ENCODE measurements at regions of chr6 and their contacts with region 1.

Region 1: DNA sequence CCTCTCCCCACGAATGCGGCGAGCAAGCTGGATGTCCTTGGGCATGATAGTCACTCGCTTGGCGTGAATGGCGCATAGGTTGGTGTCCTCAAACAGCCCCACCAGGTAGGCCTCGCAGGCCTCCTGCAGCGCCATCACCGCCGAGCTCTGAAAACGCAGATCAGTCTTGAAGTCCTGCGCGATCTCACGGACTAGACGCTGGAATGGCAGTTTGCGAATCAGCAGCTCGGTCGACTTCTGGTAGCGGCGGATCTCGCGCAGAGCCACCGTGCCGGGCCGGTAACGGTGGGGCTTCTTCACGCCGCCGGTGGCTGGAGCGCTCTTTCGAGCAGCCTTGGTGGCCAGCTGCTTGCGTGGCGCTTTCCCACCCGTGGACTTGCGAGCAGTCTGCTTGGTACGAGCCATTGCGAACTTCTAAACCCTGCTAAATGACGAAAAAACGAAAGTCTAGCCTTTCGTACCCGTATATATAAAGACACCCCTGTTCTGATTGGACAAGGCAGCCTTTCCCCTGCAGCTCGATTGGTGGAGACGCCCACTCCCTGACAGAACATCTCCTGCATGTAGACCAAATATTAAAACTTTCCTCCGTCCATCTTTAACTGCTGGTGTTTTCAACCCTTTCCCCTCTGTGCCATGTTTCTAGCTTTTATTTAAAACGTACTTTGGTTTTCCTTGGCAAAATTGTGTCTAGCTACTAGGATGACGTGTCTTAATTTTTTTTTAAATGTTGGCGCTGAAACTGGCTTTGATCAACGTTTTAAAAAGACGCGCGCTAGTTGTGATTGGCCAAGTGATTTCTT is 109.8 kb downstream of the HFE start:
- DNase-seq: peak; percentile 55 to 95 (median 93)
- ATAC-seq: peak; percentile 73
- H3K4me3 ChIP-seq: peak overlapping the region; percentile 92
- H3K4me3 Mint-ChIP-seq: peak overlapping the region; percentile 85 to 99 (median 96)
- H3K27ac ChIP-seq: peak overlapping the region; percentile 91
- H3K27ac Mint-ChIP-seq: peak overlapping the region; percentile 96 to 100 (median 98)
- H3K4me1 ChIP-seq: peaks cover 10 to 12% of the 10 kb centered on the region in 2 donors
- H3K4me1 Mint-ChIP-seq: peaks cover 23 to 65% (median 42%) of the 10 kb centered on the region in 7 donors
- H3K27me3 ChIP-seq: no peaks in the 10 kb centered on the region
- H3K27me3 Mint-ChIP-seq: peaks cover 0 to 12% (median 0%) of the 10 kb centered on the region in 5 donors

Region 2: GRCh38 chr6:25534942-25535631 is 662.0 kb before region 1 on chr6:
- CTCF ChIA-PET with region 1: no interaction called
- POLR2A ChIA-PET with region 1: no interaction called
- intact Hi-C with region 1: no loop called
- DNase-seq: no peak
- ATAC-seq: no peak
- H3K4me3 ChIP-seq: no peak overlapping the region
- H3K4me3 Mint-ChIP-seq: no peak overlapping the region
- H3K27ac ChIP-seq: no peak overlapping the region
- H3K27ac Mint-ChIP-seq: no peak overlapping the region
- H3K4me1 ChIP-seq: no peaks in the 10 kb centered on the region
- H3K4me1 Mint-ChIP-seq: no peaks in the 10 kb centered on the region
- H3K27me3 ChIP-seq: peaks cover 0 to 3% of the 10 kb centered on the region in 2 donors
- H3K27me3 Mint-ChIP-seq: peaks cover 0 to 2% (median 0%) of the 10 kb centered on the region in 5 donors

Region 3: DNA sequence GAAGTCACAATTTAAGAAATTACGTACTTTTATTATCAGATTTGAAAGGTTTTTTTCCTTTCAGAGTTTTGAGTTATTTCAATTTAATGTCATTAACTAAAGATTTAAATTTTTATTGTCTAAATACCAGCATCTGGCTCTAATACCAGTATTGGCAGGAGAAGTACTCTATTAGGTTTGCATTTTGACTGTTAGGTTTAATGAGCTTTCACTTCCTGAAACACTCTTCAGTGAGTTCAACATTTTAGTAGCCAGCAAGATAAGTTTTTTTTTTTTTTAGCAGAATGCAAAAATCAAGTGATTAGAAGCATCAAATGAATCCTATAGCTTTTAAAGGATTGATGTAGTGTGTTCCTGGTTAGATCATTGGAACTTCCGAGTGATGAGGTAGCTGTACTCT is 579.0 kb before region 1 on chr6:
- CTCF ChIA-PET with region 1: no interaction called
- POLR2A ChIA-PET with region 1: no interaction called
- intact Hi-C with region 1: no loop called
- DNase-seq: no peak
- ATAC-seq: no peak
- H3K4me3 ChIP-seq: no peak overlapping the region
- H3K4me3 Mint-ChIP-seq: no peak overlapping the region
- H3K27ac ChIP-seq: no peak overlapping the region
- H3K27ac Mint-ChIP-seq: no peak overlapping the region
- H3K4me1 ChIP-seq: no peaks in the 10 kb centered on the region
- H3K4me1 Mint-ChIP-seq: no peaks in the 10 kb centered on the region
- H3K27me3 ChIP-seq: no peaks in the 10 kb centered on the region
- H3K27me3 Mint-ChIP-seq: peaks cover 0 to 2% (median 0%) of the 10 kb centered on the region in 5 donors

Region 4: GRCh38 chr6:26087284-26088115 is 109.5 kb before region 1 on chr6 and contains the start of gene HFE:
- CTCF ChIA-PET with region 1: no interaction called
- POLR2A ChIA-PET with region 1: interaction called, 10 read pairs
- intact Hi-C with region 1: no loop called
- DNase-seq: peak in 8 of 9 donors; percentile 32 to 46 (median 38)
- ATAC-seq: peak; percentile 41
- H3K4me3 ChIP-seq: peak within 1 kb of the TSS; percentile 88
- H3K4me3 Mint-ChIP-seq: peak within 1 kb of the TSS; percentile 84 to 91 (median 88)
- H3K27ac ChIP-seq: peak within 1 kb of the TSS; percentile 72
- H3K27ac Mint-ChIP-seq: peak within 1 kb of the TSS; percentile 73 to 91 (median 84)
- H3K4me1 ChIP-seq: peaks cover 18 to 23% of the 10 kb centered on the region in 2 donors
- H3K4me1 Mint-ChIP-seq: peaks cover 31 to 51% (median 39%) of the 10 kb centered on the region in 7 donors
- H3K27me3 ChIP-seq: no peaks in the 10 kb centered on the region
- H3K27me3 Mint-ChIP-seq: peaks cover 0 to 5% (median 5%) of the 10 kb centered on the region in 5 donors
- total RNA-seq, gene HFE: 1.5 to 4.6 (median 2.5) TPM

Region 5: GRCh38 chr6:26234421-26235296 is 37.6 kb after region 1 on chr6:
- CTCF ChIA-PET with region 1: interaction called, 12 read pairs
- POLR2A ChIA-PET with region 1: interaction called, 2,165 read pairs
- intact Hi-C with region 1: loop called in 1 of 2 experiments (anchors 1 kb)
- DNase-seq: peak; percentile 48 to 94 (median 85)
- ATAC-seq: peak; percentile 80
- H3K4me3 ChIP-seq: peak overlapping the region; percentile 93
- H3K4me3 Mint-ChIP-seq: peak overlapping the region; percentile 87 to 99 (median 94)
- H3K27ac ChIP-seq: peak overlapping the region; percentile 87
- H3K27ac Mint-ChIP-seq: peak overlapping the region; percentile 93 to 100 (median 98)
- H3K4me1 ChIP-seq: peaks cover under 1 to 18% of the 10 kb centered on the region in 2 donors
- H3K4me1 Mint-ChIP-seq: peaks cover 18 to 52% (median 38%) of the 10 kb centered on the region in 7 donors
- H3K27me3 ChIP-seq: no peaks in the 10 kb centered on the region
- H3K27me3 Mint-ChIP-seq: peaks cover 0 to 15% (median 0%) of the 10 kb centered on the region in 5 donors

Region 6: DNA sequence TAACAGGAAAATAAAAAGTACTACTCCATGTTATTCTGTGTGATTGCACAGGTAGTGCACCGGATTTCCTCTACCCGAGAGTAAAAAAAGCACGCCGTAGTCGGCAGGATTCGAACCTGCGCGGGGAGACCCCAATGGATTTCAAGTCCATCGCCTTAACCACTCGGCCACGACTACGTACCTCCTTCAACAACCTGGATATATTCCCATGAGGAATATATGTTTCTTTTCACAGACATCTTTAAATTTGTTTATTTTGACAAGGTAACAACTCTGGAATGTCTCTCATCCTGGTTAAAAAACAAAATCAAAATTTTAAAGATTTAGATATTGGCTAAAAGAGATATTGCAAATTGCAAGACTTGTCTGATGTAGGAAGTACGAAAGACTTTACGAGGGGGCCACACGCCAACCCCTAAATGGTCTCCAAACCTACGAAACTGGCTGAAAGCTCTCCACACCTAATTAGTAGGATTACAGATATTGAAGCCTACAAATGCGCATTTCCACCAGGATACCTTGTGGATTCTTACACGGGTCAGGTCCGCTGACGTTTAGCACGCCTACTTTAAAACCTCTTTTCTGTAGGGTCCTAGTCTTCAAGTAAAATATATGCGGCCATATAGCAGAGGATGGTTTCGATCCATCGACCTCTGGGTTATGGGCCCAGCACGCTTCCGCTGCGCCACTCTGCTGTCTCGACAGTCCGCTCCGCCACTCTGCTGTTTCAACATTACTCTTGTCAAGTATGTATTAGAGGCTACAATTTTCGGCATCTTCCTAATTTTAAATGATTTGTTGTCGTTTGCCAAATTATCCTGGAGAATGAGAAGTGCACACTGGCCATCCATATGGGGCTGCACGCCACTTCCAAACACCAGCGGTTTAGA is 115.7 kb after region 1 on chr6:
- CTCF ChIA-PET with region 1: no interaction called
- POLR2A ChIA-PET with region 1: interaction called, 11 read pairs
- intact Hi-C with region 1: no loop called
- DNase-seq: peak; percentile 64 to 91 (median 86)
- ATAC-seq: peak; percentile 75
- H3K4me3 ChIP-seq: peak overlapping the region; percentile 81
- H3K4me3 Mint-ChIP-seq: peak overlapping the region; percentile 83 to 100 (median 96)
- H3K27ac ChIP-seq: peak overlapping the region; percentile 55
- H3K27ac Mint-ChIP-seq: peak overlapping the region; percentile 82 to 100 (median 96)
- H3K4me1 ChIP-seq: peaks cover 4 to 19% of the 10 kb centered on the region in 2 donors
- H3K4me1 Mint-ChIP-seq: peaks cover 5 to 51% (median 37%) of the 10 kb centered on the region in 7 donors
- H3K27me3 ChIP-seq: no peaks in the 10 kb centered on the region
- H3K27me3 Mint-ChIP-seq: peaks cover 0 to 8% (median 0%) of the 10 kb centered on the region in 5 donors

Region 7: GRCh38 chr6:27126815-27127537 is 929.9 kb after region 1 on chr6:
- CTCF ChIA-PET with region 1: interaction called, 4 read pairs
- POLR2A ChIA-PET with region 1: interaction called, 61 read pairs
- intact Hi-C with region 1: loop called in 1 of 2 experiments (anchors 1 kb)
- DNase-seq: peak; percentile 46 to 82 (median 77)
- ATAC-seq: peak; percentile 89
- H3K4me3 ChIP-seq: peak overlapping the region; percentile 33
- H3K4me3 Mint-ChIP-seq: peak overlapping the region; percentile 35 to 90 (median 77)
- H3K27ac ChIP-seq: no peak overlapping the region
- H3K27ac Mint-ChIP-seq: peak overlapping the region; percentile 41 to 93 (median 82)
- H3K4me1 ChIP-seq: peaks cover 4 to 6% of the 10 kb centered on the region in 2 donors
- H3K4me1 Mint-ChIP-seq: peaks cover 6 to 51% (median 15%) of the 10 kb centered on the region in 7 donors
- H3K27me3 ChIP-seq: no peaks in the 10 kb centered on the region
- H3K27me3 Mint-ChIP-seq: no peaks in the 10 kb centered on the region

Region 8: GRCh38 chr6:27864906-27865849 is 1668.1 kb after region 1 on chr6:
- CTCF ChIA-PET with region 1: no interaction called
- POLR2A ChIA-PET with region 1: interaction called, 144 read pairs
- intact Hi-C with region 1: no loop called
- DNase-seq: peak; percentile 56 to 93 (median 89)
- ATAC-seq: peak; percentile 85
- H3K4me3 ChIP-seq: peak overlapping the region; percentile 74
- H3K4me3 Mint-ChIP-seq: peak overlapping the region; percentile 85 to 99 (median 97)
- H3K27ac ChIP-seq: peak overlapping the region; percentile 71
- H3K27ac Mint-ChIP-seq: peak overlapping the region; percentile 88 to 98 (median 95)
- H3K4me1 ChIP-seq: peaks cover 8 to 25% of the 10 kb centered on the region in 2 donors
- H3K4me1 Mint-ChIP-seq: peaks cover 22 to 64% (median 46%) of the 10 kb centered on the region in 7 donors
- H3K27me3 ChIP-seq: no peaks in the 10 kb centered on the region
- H3K27me3 Mint-ChIP-seq: peaks cover 0 to 16% (median 0%) of the 10 kb centered on the region in 5 donors